Activated naive CD4-positive, alpha-beta T cell treated with anti-CD3 and anti-CD28 coated beads for 36 hours (primary cell): ENCODE measurements at regions of chr16 and their contacts with region 1.

Region 1: DNA sequence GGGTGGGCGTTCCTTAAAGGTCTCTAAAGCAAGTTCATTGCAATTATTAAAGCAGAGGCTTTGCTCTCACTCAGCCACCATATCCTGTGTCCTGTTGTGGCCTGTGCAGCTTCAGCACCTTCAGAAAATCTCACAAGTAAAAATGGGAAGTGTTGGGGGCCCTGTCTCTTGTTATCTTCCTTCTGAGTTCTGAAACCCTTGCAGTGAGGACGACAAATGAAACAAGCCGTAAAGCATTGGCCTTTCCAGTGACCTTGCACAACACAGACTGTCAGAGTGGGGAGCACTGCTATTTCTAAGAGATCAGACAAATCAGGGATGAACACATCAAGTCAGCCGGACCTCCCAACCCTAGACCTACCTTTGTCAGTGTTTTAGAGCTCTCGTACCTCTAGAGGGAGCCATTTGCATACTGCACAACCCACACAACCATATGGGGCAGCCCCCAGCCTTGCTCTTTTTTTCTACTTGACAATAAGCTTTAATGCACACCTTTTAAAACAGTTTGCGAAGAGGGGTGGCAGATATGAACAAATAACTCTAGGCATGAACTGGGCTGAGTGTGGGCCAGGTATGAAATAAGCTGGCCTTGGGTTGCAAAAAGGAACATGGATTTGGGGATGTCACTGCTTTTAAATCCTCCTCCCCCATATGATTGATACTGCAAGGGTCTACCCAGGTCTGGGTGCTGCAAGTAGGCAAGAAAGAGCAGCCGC is 89.8 kb downstream of the KATNIP start:
- DNase-seq: peak; percentile 61
- H3K4me3 Mint-ChIP-seq: no peak overlapping the region
- H3K27ac Mint-ChIP-seq: no peak overlapping the region
- H3K4me1 Mint-ChIP-seq: no peaks in the 10 kb centered on the region
- H3K27me3 Mint-ChIP-seq: no peaks in the 10 kb centered on the region

Region 2: DNA sequence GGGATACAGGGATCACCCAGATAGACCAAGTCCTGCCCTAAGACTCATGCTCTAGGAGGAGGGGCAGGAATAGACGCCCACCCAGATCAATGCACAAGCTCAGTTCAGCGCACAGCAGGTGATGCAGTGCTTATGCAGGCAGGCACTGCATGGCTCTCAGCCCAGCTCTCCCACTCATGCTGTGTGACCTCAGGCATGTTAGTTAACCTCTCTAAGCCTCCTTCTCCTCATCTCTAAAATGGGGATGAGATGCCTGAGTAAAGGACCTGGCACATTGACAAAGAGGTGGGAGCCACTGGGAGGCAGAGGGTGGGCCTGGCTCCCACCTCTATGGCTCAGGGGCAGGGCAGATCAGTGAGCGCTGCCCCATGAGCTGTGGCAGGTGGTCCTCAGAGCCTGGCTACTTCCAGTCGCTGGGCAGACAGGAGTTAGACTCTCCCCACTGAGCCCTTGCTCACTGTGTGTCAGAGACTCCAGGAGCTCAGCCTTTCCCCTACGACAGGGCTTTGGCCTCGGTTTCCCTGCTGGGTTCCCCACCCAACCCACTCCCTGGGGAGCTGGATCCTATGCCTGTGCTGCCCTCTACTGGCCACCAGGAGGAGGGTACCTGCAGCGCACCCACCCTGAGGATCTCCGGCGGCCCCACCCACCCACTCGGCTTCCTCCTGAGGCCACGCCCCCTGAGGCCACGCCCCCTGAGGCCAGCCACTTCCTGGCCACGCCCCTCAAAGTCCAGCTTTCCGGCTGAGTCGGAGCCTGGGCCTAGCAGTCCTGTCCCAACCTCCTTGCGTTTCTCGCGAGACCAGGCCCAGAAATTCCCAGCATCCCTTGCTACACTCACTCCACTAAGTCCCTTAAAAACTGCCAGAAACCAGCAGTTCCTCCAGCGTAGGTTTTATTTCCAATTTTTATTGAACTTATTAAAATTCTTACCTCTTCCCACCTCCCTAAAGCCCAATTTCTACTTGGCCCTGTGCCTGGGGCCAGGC is 227.7 kb after region 1 on chr16:
- CTCF ChIA-PET with region 1: interaction called, 4 read pairs
- intact Hi-C with region 1: loop called (anchors 10 kb)
- DNase-seq: peak; percentile 75
- H3K4me3 Mint-ChIP-seq: no peak overlapping the region
- H3K27ac Mint-ChIP-seq: no peak overlapping the region
- H3K4me1 Mint-ChIP-seq: no peaks in the 10 kb centered on the region
- H3K27me3 Mint-ChIP-seq: no peaks in the 10 kb centered on the region

Region 3: DNA sequence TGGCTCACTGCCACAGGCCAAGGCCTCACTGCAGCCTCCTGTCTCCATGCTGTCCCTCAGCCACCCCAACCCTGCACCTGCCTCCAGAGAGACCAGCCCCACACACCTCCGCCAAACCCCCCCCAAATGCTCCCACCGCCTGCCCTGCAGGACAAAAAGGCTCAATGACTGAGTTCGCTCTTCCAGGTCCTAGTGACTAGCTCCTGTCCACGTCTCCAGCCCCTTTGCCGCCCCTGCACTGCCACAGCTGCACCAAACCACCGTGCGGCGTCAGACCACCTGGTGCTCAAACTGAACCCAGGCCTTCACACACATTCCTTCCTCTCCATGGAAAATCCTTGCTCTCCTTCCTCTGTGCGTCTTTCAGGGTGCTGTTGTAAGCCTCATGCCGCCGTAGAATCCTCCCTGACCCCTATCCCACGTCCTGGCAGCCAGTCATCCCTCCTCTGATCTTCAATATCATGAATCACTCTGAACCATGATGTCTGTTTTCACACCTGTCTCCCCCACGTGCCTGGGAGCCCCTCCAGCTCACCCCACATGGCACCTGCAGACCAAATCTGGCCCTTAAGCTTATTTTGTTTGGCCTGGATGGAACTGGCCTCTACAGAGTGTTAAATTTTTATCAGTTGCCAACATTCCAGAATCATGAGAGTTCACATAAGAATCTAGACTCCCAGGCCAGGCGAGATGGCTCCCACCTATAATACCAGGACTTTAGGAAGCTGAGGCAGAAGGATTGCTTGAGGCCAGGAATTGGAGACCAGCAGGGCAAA is 428.1 kb after region 1 on chr16:
- CTCF ChIA-PET with region 1: no interaction called
- intact Hi-C with region 1: loop called (anchors 2 kb)
- DNase-seq: no peak
- H3K4me3 Mint-ChIP-seq: no peak overlapping the region
- H3K27ac Mint-ChIP-seq: no peak overlapping the region
- H3K4me1 Mint-ChIP-seq: no peaks in the 10 kb centered on the region
- H3K27me3 Mint-ChIP-seq: peaks cover 12% of the 10 kb centered on the region